Activated naive CD4-positive, alpha-beta T cell treated with anti-CD3 and anti-CD28 coated beads, Interleukin-2, amount 10 ng/mL, durations not matched to agents 7 days and 5 days (primary cell): ENCODE measurements at regions of chr6 and their contacts with region 1.

Region 1: GRCh38 chr6:25070547-25071366 is 135.0 kb upstream of the RIPOR2 start:
- DNase-seq: peak; percentile 86
- H3K4me3 Mint-ChIP-seq: peak overlapping the region; percentile 21
- H3K27ac Mint-ChIP-seq: peak overlapping the region; percentile 91
- H3K4me1 Mint-ChIP-seq: peaks cover 11% of the 10 kb centered on the region
- H3K27me3 Mint-ChIP-seq: peaks cover 7% of the 10 kb centered on the region

Region 2: DNA sequence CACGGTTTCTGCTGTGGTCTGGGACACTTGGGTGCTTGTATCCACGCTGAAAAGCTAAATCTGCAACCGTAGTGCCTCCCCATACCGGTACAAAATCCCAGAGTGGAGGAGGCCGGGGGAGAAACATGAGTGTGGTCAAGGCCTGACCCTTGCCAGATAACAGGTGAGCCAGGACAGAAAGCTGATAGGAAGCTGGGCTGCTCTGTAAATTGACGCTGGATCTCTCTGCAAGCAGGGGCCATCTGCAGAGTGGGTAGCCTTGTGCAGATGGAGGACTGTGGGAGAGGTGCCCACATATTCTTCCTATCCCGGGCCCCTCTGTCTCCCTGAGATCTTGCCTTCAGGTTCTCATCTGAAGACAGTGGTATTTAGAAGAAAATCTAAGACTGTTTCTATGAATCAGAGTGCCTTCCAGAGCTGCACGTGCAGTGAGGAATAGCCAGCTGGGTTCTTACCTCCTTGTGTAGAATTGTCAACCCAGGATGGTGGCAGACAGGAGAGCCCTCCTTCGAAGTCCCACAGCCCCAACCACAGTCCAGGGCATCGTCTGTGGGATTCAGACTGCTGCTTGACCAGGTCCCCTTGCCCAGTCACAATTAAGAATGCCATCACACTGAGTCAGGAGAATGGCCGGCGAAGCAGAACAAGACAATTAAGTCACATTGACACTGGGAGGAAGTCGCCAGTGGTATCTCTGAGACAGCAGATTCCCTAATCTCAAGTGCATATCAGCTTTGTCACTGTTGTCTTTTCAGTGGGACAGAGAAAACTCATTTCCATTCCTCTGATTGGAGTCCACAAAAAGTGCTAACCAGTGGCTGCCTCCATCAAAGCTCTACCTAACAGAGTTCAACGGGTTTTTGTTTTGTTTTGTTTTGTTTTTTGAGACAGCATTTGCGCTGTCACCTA is 35.0 kb before region 1 on chr6:
- CTCF ChIA-PET with region 1: interaction called, 17 read pairs
- DNase-seq: peak; percentile 31
- H3K4me3 Mint-ChIP-seq: peak overlapping the region; percentile 77
- H3K27ac Mint-ChIP-seq: peak overlapping the region; percentile 87
- H3K4me1 Mint-ChIP-seq: peaks cover 75% of the 10 kb centered on the region
- H3K27me3 Mint-ChIP-seq: no peaks in the 10 kb centered on the region

Region 3: DNA sequence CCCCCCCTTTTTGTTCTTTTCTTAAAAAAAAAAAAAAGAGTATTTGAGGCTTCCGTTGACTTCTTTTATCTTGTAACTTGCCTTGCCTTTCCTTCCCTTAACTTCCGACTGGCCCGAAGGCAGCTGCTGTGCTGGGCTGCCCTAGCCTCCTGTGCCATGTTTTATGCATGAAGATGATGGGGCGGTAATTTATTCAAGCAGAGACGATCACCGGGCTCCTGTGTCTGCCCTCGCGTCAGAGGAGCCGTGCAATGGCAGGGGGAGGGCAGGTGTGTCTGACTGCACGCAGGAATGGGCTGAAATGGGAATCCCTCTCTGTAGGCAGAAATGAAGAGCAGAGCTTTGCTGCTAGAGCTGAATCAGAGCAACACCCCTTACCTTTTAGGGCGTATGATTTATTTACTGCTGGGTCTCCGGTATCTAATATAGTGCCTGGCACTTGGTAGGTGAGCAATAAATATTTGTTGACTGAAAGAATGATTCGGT is 28.7 kb before region 1 on chr6:
- CTCF ChIA-PET with region 1: interaction called, 22 read pairs
- DNase-seq: peak; percentile 67
- H3K4me3 Mint-ChIP-seq: peak overlapping the region; percentile 93
- H3K27ac Mint-ChIP-seq: peak overlapping the region; percentile 95
- H3K4me1 Mint-ChIP-seq: peaks cover 62% of the 10 kb centered on the region
- H3K27me3 Mint-ChIP-seq: peaks cover 5% of the 10 kb centered on the region